Left cardiac atrium (tissue), 4 donors: ENCODE measurements at regions of chr10 and their contacts with region 1.

Region 1: DNA sequence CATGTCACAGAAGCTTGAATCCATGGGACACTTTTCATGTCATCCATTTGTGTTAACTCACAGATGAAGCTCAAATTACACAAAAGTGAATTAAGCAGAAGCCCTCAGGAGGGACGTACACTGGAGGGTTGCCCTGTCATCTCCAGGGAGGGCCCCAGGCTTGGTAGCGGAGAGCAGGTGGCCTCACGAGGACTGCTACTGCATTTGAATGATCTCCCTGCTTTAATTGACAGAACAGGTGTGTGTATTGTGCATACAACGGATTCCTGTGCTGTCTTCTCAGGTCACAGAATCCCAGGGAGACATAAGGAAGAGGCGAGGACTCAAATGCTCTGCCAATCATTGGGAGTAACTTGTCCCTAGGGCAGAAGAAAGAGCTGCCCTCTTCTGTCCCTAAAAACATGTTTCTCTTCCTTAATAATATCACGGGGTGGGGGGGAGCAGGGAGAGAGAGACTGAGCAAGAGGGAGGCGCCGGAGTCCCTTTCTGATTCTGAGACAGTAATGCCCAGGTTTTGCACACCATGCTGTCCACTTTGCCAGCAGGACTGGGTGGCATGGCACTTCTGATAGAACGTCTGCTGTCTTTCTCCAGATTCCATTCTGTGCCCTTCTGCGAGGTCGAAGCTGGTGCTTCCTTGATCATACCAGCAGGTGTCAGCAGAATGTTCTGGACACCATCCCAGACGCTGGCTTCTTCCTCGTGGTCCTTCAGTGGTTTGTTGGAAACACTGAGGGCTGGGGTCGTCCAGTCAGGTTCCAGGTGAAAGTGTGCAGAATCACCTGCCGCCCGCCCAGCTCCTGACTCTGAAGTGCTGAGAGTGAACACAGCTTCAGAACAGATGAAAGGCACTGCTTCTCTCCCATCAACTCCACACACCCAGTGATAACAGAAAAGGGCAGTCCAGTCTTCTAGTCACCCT is 26.2 kb upstream of the RASGEF1A start:
- DNase-seq: peak; percentile 59
- ATAC-seq: peak; percentile 86 to 87

Region 2: GRCh38 chr10:43348511-43349312 is 55.7 kb after region 1 on chr10:
- intact Hi-C with region 1: loop called in 1 of 2 experiments (anchors 2 kb)
- DNase-seq: peak; percentile 85
- ATAC-seq: peak; percentile 96 to 98

Region 3: DNA sequence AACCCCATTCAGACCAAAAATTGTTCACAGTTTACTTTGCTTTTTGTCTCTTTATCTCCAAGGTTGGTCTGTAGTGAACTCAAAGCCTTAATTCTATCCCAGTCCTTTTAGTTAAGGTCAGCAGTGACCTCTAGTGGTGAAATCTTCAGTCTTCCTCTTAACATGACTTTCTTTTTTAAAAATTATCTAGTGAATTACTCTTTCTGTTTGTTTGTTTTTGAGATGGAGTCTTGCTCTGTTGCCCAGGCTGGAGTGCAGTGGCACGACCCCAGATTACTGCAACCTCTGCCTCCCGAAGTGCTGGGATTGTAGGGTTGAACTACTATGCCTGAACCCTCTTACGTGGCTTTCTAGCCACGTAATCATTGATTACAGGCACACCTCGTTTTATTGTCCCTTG is 168.9 kb after region 1 on chr10:
- intact Hi-C with region 1: loop called (anchors 2 to 5 kb)
- DNase-seq: no peak
- ATAC-seq: peak; percentile 34 to 75